H1 (cell line): ENCODE measurements at regions of chr7 and their contacts with region 1.

Region 1: GRCh38 chr7:142535123-142535779 is 214.0 kb upstream of the PRSS1 start:
- DNase-seq: peak in 1 of 2 experiments; percentile 85
- H3K4me3 ChIP-seq: no peak overlapping the region
- H3K27ac ChIP-seq: no peak overlapping the region
- H3K4me1 ChIP-seq: peaks cover 0 to 2% (median 0%) of the 10 kb centered on the region in 4 experiments; a peak in 1 of 7 replicates
- H3K27me3 ChIP-seq: no peaks in the 10 kb centered on the region; a peak in 1 of 7 replicates
- CTCF ChIP-seq: peak; percentile 76 to 95 (median 91)
- EP300 ChIP-seq: no peak
- POLR2A ChIP-seq: no peak
- RAD21 ChIP-seq: peak; percentile 94

Region 2: DNA sequence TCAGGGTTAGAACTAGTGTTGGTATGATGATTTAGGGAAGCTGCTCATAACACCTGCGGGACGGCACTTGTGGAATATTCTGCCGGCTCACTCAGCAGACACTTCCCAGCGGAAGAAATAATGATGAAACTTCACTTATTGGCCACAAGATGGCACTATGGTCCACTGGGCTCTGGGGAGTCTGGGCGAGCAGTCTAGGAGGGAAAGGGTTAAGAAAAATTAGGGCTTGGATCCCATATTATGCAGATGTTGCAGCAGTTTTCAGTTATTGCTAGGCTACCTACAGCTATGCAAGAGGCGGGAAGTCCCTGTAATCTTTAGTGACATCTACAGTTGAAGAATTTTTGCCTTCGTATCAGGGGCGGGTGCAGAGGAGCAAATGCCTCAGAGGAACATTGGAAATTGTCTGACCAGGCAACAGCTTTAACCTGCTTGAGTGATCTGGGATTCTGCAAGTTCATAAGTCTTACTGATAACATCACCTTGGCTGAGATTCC is 38.7 kb before region 1 on chr7:
- CTCF ChIA-PET with region 1: interaction called, 665 read pairs
- POLR2A ChIA-PET with region 1: no interaction called
- DNase-seq: no peak
- H3K4me3 ChIP-seq: no peak overlapping the region
- H3K27ac ChIP-seq: no peak overlapping the region
- H3K4me1 ChIP-seq: no peaks in the 10 kb centered on the region
- H3K27me3 ChIP-seq: no peaks in the 10 kb centered on the region
- CTCF ChIP-seq: peak; percentile 58 to 83 (median 78)
- EP300 ChIP-seq: no peak
- POLR2A ChIP-seq: no peak
- RAD21 ChIP-seq: peak; percentile 37 to 61

Region 3: DNA sequence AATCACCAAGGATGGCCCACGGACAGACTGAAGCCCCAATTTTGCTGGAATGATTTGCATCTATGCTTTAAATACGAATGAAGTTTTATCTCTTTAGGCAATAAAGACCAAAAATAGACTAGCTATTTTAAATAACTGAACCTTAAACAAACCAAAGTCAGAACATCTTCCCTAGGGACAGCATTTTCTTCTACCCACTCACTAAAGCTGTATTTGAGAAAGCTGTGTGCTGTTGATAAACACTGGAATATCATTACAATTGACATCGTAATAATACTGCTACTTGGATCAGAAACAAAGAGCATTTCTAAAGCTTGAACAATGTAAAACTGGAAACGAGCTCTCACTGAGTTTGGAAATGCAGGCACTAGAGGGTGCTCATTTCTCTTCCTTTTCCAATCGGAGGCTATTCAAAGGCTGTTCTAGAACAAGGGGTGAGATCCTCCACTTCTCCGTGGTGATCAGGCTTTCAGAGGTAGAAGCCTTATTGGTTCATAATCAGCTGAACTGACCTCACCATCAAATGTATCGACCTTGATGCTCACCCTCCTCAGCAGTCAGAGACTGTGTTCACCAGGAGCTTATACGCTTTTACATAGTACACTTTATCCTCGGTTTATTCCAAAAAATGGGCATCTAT is 11.3 kb before region 1 on chr7:
- CTCF ChIA-PET with region 1: interaction called, 75 read pairs
- POLR2A ChIA-PET with region 1: no interaction called
- DNase-seq: no peak
- H3K4me3 ChIP-seq: no peak overlapping the region
- H3K27ac ChIP-seq: no peak overlapping the region
- H3K4me1 ChIP-seq: no peaks in the 10 kb centered on the region
- H3K27me3 ChIP-seq: 0 out of 7 replicates have a peak, but pooled peaks cover 0 to 2% (median 0%) of the 10 kb centered on the region in 4 experiments
- CTCF ChIP-seq: peak in 1 of 3 experiments; percentile 18; a peak in 1 of 4 replicates
- EP300 ChIP-seq: no peak
- POLR2A ChIP-seq: no peak
- RAD21 ChIP-seq: no peak

Region 4: GRCh38 chr7:142598297-142598696 is 63.0 kb after region 1 on chr7:
- CTCF ChIA-PET with region 1: interaction called, 11 read pairs
- POLR2A ChIA-PET with region 1: no interaction called
- DNase-seq: no peak
- H3K4me3 ChIP-seq: no peak overlapping the region
- H3K27ac ChIP-seq: no peak overlapping the region
- H3K4me1 ChIP-seq: no peaks in the 10 kb centered on the region
- H3K27me3 ChIP-seq: no peaks in the 10 kb centered on the region
- CTCF ChIP-seq: no peak
- EP300 ChIP-seq: no peak
- POLR2A ChIP-seq: no peak
- RAD21 ChIP-seq: no peak

Region 5: GRCh38 chr7:142612237-142612881 is 77.1 kb after region 1 on chr7:
- CTCF ChIA-PET with region 1: interaction called, 16 read pairs
- POLR2A ChIA-PET with region 1: no interaction called
- DNase-seq: no peak
- H3K4me3 ChIP-seq: no peak overlapping the region
- H3K27ac ChIP-seq: no peak overlapping the region
- H3K4me1 ChIP-seq: peaks cover 0 to 2% (median 1%) of the 10 kb centered on the region in 4 experiments; a peak in 2 of 7 replicates
- H3K27me3 ChIP-seq: no peaks in the 10 kb centered on the region
- CTCF ChIP-seq: no peak
- EP300 ChIP-seq: no peak
- POLR2A ChIP-seq: no peak
- RAD21 ChIP-seq: no peak

Region 6: DNA sequence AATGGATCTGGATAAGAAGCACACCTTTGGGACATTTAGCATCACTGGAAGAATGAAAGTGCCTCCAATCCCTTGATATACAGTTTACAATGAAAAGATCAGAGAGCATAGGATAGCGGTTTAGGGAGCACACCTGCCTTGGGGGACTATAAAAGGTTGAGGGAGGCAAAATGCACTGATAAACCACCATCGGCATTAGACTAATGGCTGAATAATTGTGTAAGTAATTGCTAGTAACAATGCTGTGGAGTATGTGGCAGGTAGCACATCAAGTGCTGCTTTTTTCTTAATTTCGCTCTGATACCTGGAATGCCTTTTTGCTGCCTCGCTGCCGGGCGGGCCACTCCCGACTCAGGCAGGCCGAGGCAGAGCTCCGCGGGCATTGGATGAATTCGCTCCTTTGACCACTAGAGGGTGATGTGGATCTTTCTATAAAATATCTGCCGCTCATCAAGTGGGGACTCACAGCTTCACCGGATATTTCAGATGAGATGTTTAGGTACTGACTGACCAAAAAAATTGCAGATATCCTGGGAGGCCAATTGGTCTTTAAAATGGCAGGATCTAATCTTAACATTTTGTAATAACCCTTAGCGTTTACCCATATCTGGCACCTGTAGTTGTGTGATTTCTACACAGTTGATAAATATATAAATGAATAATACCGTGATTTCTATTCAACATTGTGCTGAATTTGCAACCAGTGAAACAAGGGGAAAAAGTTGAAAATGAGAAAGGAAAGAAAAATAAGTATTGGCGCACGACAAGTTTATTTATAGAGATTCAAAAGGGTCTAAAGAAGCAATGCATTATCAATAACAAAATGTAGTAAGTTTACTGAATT is 97.3 kb after region 1 on chr7:
- CTCF ChIA-PET with region 1: interaction called, 15 read pairs
- POLR2A ChIA-PET with region 1: no interaction called
- DNase-seq: peak; percentile 43 to 81
- H3K4me3 ChIP-seq: no peak overlapping the region
- H3K27ac ChIP-seq: no peak overlapping the region
- H3K4me1 ChIP-seq: no peaks in the 10 kb centered on the region
- H3K27me3 ChIP-seq: no peaks in the 10 kb centered on the region
- CTCF ChIP-seq: peak; percentile 59 to 90 (median 72)
- EP300 ChIP-seq: no peak
- POLR2A ChIP-seq: no peak
- RAD21 ChIP-seq: peak; percentile 87 to 92